A673 (cell line): ENCODE measurements at regions of chr12 and their contacts with region 1.

Region 1: GRCh38 chr12:65962921-65963861 is 138.9 kb downstream of the HMGA2 start:
- DNase-seq: peak; percentile 70
- H3K4me3 ChIP-seq: no peak overlapping the region
- H3K27ac ChIP-seq: peak overlapping the region; percentile 52
- H3K4me1 ChIP-seq: peaks cover 59% of the 10 kb centered on the region
- H3K27me3 ChIP-seq: no peaks in the 10 kb centered on the region
- CTCF ChIP-seq: peak; percentile 64

Region 2: DNA sequence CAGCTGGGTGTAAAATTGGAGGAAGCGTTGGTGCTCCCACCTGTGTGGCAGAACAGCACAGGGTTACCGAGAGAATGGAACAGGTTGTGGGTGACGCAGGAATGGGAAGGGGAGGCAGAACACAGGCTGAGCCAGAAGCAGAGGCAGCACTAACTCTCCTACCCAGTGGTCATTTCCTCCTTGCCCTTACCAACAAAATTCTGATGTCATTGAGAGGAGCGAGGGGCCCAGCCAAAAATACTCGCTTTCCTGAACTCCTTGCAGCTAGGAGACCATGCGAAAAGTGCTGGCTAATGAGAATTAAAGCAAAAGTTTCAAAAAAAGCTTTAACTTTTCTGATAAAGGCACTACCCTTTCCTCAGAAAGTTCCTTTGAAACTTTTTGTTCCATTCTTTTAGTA is 193.3 kb before region 1 on chr12:
- CTCF ChIA-PET with region 1: no interaction called
- POLR2A ChIA-PET with region 1: interaction called, 13 read pairs
- intact Hi-C with region 1: no loop called
- DNase-seq: no peak
- H3K4me3 ChIP-seq: no peak overlapping the region
- H3K27ac ChIP-seq: no peak overlapping the region
- H3K4me1 ChIP-seq: no peaks in the 10 kb centered on the region
- H3K27me3 ChIP-seq: no peaks in the 10 kb centered on the region
- CTCF ChIP-seq: no peak

Region 3: GRCh38 chr12:66072566-66072965 is 109.4 kb after region 1 on chr12:
- CTCF ChIA-PET with region 1: no interaction called
- POLR2A ChIA-PET with region 1: interaction called, 13 read pairs
- intact Hi-C with region 1: loop called (anchors 2 kb)
- DNase-seq: no peak
- H3K4me3 ChIP-seq: no peak overlapping the region
- H3K27ac ChIP-seq: no peak overlapping the region
- H3K4me1 ChIP-seq: peaks cover 2% of the 10 kb centered on the region
- H3K27me3 ChIP-seq: no peaks in the 10 kb centered on the region
- CTCF ChIP-seq: no peak